CD4-positive, alpha-beta T cell (primary cell): ENCODE measurements at regions of chr10 and their contacts with region 1.

Region 1: GRCh38 chr10:27155066-27155754 is at the start of gene MASTL:
- DNase-seq: peak; percentile 88 to 98 (median 93)
- ATAC-seq: peak; percentile 77
- H3K4me3 ChIP-seq: peak within 1 kb of the TSS; percentile 97
- H3K4me3 Mint-ChIP-seq: peak within 1 kb of the TSS; percentile 97
- H3K27ac ChIP-seq: peak within 1 kb of the TSS; percentile 100
- H3K27ac Mint-ChIP-seq: peak within 1 kb of the TSS; percentile 100
- H3K4me1 ChIP-seq: peaks cover 31% of the 10 kb centered on the region
- H3K4me1 Mint-ChIP-seq: peaks cover 53% of the 10 kb centered on the region
- H3K27me3 ChIP-seq: no peaks in the 10 kb centered on the region
- H3K27me3 Mint-ChIP-seq: no peaks in the 10 kb centered on the region
- CTCF ChIP-seq: no peak
- total RNA-seq, gene MASTL: 24.2 to 25.1 TPM

Region 2: DNA sequence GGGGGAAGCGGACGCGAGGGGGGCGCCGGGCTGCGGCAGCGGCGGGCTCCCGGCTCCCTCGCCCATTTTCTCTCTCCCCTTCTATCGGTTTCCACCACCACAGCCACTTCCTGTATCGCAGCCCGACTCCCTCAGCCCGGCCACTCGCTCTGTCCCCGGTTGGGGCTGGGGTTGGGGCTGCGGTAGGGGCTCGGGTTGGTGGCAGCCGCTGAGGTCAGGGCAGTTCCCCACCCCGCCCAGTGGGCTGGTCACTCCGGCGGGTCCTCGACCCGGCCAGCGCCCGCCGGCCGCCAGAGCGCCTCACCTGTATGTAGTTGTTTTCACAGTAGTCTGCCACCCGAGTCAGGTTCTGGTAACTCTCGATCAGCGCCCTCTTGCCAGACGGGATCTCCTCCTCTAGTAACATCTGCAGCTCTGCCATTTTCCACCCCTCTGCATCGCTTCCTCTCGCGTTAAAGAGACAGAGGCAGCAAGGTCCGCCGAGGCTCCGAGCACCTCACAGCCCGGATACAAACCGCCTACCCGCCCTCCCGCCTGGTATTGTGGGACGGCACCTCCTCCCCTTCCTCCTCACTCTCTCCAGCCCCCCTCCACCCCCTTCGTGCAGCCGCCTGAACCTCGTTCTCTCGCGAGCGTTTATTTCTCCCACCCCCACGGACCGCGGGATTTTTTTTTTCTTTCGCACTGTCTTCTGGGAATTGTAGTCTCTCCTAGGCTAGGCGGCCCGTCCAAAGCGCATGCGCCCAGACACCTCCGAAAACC is 294.6 kb before region 1 on chr10 and contains the start of gene ABI1:
- CTCF ChIA-PET with region 1: interaction called, 3 read pairs
- POLR2A ChIA-PET with region 1: interaction called, 15 read pairs
- intact Hi-C with region 1: loop called (anchors 2 kb)
- DNase-seq: peak; percentile 96 to 99 (median 98)
- ATAC-seq: peak; percentile 90
- H3K4me3 ChIP-seq: peak within 1 kb of the TSS; percentile 91
- H3K4me3 Mint-ChIP-seq: peak within 1 kb of the TSS; percentile 95
- H3K27ac ChIP-seq: peak within 1 kb of the TSS; percentile 88 to 97
- H3K27ac Mint-ChIP-seq: peak within 1 kb of the TSS; percentile 87
- H3K4me1 ChIP-seq: peaks cover 22% of the 10 kb centered on the region
- H3K4me1 Mint-ChIP-seq: peaks cover 33% of the 10 kb centered on the region
- H3K27me3 ChIP-seq: no peaks in the 10 kb centered on the region
- H3K27me3 Mint-ChIP-seq: peaks cover 7% of the 10 kb centered on the region
- CTCF ChIP-seq: no peak
- total RNA-seq, gene ABI1: 83.2 to 83.6 TPM

Region 3: GRCh38 chr10:27143686-27144085 is 11.5 kb before region 1 on chr10:
- CTCF ChIA-PET with region 1: interaction called, 3 read pairs
- POLR2A ChIA-PET with region 1: interaction called, 16 read pairs
- intact Hi-C with region 1: no loop called
- DNase-seq: no peak
- ATAC-seq: no peak
- H3K4me3 ChIP-seq: no peak overlapping the region
- H3K4me3 Mint-ChIP-seq: no peak overlapping the region
- H3K27ac ChIP-seq: no peak overlapping the region
- H3K27ac Mint-ChIP-seq: no peak overlapping the region
- H3K4me1 ChIP-seq: peaks cover 3% of the 10 kb centered on the region
- H3K4me1 Mint-ChIP-seq: peaks cover 24% of the 10 kb centered on the region
- H3K27me3 ChIP-seq: no peaks in the 10 kb centered on the region
- H3K27me3 Mint-ChIP-seq: no peaks in the 10 kb centered on the region
- CTCF ChIP-seq: no peak

Region 4: GRCh38 chr10:27252267-27253000 is 97.2 kb after region 1 on chr10:
- CTCF ChIA-PET with region 1: no interaction called
- POLR2A ChIA-PET with region 1: interaction called, 13 read pairs
- intact Hi-C with region 1: no loop called
- DNase-seq: peak; percentile 63 to 86 (median 78)
- ATAC-seq: peak; percentile 92
- H3K4me3 ChIP-seq: peak overlapping the region; percentile 58
- H3K4me3 Mint-ChIP-seq: peak overlapping the region; percentile 90
- H3K27ac ChIP-seq: peak overlapping the region in 1 of 2 donors; percentile 46
- H3K27ac Mint-ChIP-seq: peak overlapping the region; percentile 83
- H3K4me1 ChIP-seq: peaks cover 12% of the 10 kb centered on the region
- H3K4me1 Mint-ChIP-seq: peaks cover 11% of the 10 kb centered on the region
- H3K27me3 ChIP-seq: peaks cover 0 to under 1% of the 10 kb centered on the region in 2 experiments
- H3K27me3 Mint-ChIP-seq: peaks cover 6% of the 10 kb centered on the region
- CTCF ChIP-seq: peak; percentile 87

Region 5: DNA sequence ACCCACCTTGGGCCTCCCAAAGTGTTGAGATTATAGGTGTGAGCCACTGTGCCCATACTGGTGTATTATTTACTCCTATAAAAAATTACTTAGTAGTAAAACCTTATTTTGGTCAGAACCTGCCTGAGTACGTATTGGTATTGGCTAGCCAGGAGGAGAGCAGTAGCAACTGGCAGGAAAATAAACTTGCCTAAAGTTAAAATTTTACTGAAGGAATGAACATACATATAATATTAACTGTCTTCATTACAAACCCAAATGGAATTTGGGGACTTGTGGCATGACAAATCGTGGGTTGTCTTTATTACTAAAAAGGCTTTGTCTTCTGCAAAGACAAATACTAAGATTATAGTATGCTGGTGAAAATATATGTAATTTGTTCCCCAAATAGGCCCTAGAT is 357.3 kb after region 1 on chr10:
- CTCF ChIA-PET with region 1: no interaction called
- POLR2A ChIA-PET with region 1: no interaction called
- intact Hi-C with region 1: no loop called
- DNase-seq: no peak
- ATAC-seq: no peak
- H3K4me3 ChIP-seq: no peak overlapping the region
- H3K4me3 Mint-ChIP-seq: no peak overlapping the region
- H3K27ac ChIP-seq: no peak overlapping the region
- H3K27ac Mint-ChIP-seq: no peak overlapping the region
- H3K4me1 ChIP-seq: peaks cover 12% of the 10 kb centered on the region
- H3K4me1 Mint-ChIP-seq: peaks cover 87% of the 10 kb centered on the region
- H3K27me3 ChIP-seq: no peaks in the 10 kb centered on the region
- H3K27me3 Mint-ChIP-seq: no peaks in the 10 kb centered on the region
- CTCF ChIP-seq: no peak

Region 6: DNA sequence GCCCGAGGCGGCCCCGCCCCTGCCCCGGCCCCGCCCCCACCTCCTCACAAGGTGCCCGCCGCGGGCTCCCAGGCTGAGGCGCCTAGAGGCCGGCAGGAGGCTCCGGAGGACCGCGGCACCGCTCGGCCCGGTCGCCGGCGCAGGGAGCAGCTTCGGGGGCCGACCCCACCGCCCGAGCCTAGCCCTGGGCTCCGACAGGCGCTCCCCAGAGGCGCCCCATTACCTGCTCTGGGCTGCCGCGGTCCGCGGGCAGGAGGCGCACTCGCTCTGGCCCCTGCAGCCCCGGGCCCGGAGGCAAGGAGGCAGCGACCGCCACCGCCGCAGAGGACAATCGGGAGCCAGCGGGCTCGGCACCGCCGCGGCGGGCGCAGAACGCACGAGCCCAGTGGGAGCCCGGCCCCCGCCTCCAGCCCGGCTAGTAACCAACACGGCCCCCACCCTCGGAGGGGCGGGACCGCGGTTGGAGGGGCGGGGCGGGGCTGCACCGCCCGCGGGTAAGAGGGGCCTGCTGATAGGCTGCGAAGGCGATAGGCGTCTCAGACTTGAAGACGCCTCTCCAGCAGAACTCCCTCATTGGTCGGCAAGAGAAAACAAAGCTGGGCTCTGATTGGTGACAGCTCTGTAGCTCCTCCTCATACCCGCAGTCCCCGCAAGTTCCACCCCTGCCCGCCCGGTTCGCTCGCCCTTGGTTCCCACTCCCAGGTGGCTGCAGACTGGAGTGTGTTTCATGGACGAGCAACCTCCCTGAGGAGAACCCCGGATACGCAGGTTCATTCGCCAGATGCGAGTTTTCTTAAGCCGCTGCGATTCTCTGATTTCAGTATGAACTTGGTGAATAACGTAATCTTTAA is 1147.7 kb after region 1 on chr10 and contains the start of gene MPP7:
- CTCF ChIA-PET with region 1: no interaction called
- POLR2A ChIA-PET with region 1: interaction called, 4 read pairs
- intact Hi-C with region 1: loop called in 1 of 2 experiments (anchors 10 kb)
- DNase-seq: peak; percentile 92 to 98 (median 96)
- ATAC-seq: peak; percentile 94
- H3K4me3 ChIP-seq: peak within 1 kb of the TSS; percentile 64
- H3K4me3 Mint-ChIP-seq: peak within 1 kb of the TSS; percentile 91
- H3K27ac ChIP-seq: peak within 1 kb of the TSS in 1 of 2 donors; percentile 77
- H3K27ac Mint-ChIP-seq: peak within 1 kb of the TSS; percentile 90
- H3K4me1 ChIP-seq: peaks cover 29% of the 10 kb centered on the region
- H3K4me1 Mint-ChIP-seq: peaks cover 70% of the 10 kb centered on the region
- H3K27me3 ChIP-seq: no peaks in the 10 kb centered on the region
- H3K27me3 Mint-ChIP-seq: no peaks in the 10 kb centered on the region
- CTCF ChIP-seq: peak; percentile 71
- total RNA-seq, gene MPP7: 30.4 to 32.5 TPM